ENCODE measurements at regions of chrX and their contacts with region 1.

Region 1: GRCh38 chrX:65783746-65784145 is 116.3 kb downstream of the MSN start:
- DNase-seq: no peak
- H3K4me3 Mint-ChIP-seq: peak overlapping the region; percentile 22
- H3K27ac Mint-ChIP-seq: peak overlapping the region; percentile 70
- H3K4me1 Mint-ChIP-seq: peaks cover 24% of the 10 kb centered on the region
- H3K27me3 Mint-ChIP-seq: no peaks in the 10 kb centered on the region

Region 2: DNA sequence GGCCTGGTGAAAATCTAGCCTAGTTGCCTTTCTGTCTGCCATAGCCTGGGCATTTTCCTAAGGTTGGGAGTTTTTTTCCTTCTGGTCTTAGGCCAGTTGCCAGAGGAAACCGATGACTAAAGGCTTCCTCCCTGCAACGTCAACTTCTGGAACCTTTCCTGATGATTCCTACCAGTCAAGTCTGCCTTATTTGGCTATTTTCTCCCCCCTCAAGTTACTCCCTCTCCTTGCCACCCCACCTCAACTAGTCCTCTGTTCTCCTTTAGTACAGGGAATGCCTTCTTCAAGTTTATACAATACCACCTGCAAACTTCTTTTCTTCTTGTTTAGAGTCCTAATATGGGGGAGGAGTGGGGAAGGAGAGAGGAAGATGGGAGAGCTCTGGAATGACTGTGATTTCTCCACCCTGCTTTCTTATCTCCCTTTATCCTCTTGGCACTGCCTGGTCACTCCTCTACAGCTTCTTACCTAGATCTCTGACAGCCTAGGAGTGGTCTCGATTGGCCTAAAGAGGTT is 105.7 kb before region 1 on chrX:
- intact Hi-C with region 1: no loop called
- DNase-seq: no peak
- H3K4me3 Mint-ChIP-seq: peak overlapping the region; percentile 45
- H3K27ac Mint-ChIP-seq: peak overlapping the region; percentile 78
- H3K4me1 Mint-ChIP-seq: peaks cover 89% of the 10 kb centered on the region
- H3K27me3 Mint-ChIP-seq: no peaks in the 10 kb centered on the region

Region 3: DNA sequence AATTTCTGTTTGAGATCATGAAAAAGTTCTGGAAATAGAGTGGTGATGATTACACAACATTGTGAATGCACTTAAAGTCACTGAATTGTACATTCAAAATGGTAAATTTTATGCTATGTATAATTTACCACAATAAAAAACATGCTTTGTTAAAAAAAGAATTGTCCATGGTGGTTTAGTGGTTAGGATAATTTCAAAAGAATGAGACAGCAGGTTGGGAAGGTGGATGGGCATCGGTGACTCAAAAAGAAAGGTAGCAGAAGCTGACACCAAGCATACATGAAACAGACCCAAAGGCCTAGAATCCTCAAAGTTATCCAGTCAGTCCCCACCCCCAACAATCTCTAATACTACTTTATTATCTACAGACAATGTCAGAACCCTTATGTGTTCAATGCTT is 25.2 kb before region 1 on chrX:
- intact Hi-C with region 1: loop called (anchors 2 kb)
- DNase-seq: no peak
- H3K4me3 Mint-ChIP-seq: no peak overlapping the region
- H3K27ac Mint-ChIP-seq: no peak overlapping the region
- H3K4me1 Mint-ChIP-seq: peaks cover 41% of the 10 kb centered on the region
- H3K27me3 Mint-ChIP-seq: no peaks in the 10 kb centered on the region

Measured in activated T-helper 1 cell treated with anti-CD3 and anti-CD28 coated beads, Interleukin-12 subunit alpha, Interleukin-12 subunit beta, Interleukin-2, Interleukin-4 antibody, amounts not matched to agents 30 ng/mL and 10 ng/mL and 1 ng/mL, durations not matched to agents 14 hours and 24 hours and 36 hours (primary cell).